OCI-LY7 (cell line): ENCODE measurements at regions of chr18 and their contacts with region 1.

Region 1: DNA sequence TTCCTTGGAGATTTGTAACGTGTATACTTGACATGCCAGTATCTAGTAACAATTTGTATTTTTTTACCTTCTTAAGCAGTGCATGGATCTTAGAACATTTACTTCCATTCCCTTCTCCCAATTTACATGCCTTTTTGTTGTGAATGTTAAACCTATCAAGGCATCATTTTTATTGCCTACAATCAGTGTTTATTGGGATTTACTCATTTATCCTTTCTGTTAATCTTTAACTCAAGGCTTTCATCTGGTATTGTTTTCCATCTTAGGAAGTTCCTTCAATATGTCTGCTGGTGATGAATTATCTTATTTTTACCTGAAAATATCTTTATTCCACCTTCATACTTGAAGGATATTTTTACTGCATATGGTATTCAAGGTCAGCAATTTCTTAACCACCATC is 88.5 kb upstream of the EMILIN2 start:
- DNase-seq: no peak
- H3K4me3 ChIP-seq: no peak overlapping the region
- H3K27ac ChIP-seq: no peak overlapping the region
- H3K4me1 ChIP-seq: no peaks in the 10 kb centered on the region
- CTCF ChIP-seq: no peak

Region 2: GRCh38 chr18:2486426-2486825 is 271.9 kb before region 1 on chr18:
- CTCF ChIA-PET with region 1: no interaction called
- POLR2A ChIA-PET with region 1: no interaction called
- intact Hi-C with region 1: no loop called
- DNase-seq: no peak
- H3K4me3 ChIP-seq: no peak overlapping the region
- H3K27ac ChIP-seq: no peak overlapping the region
- H3K4me1 ChIP-seq: peaks cover 8% of the 10 kb centered on the region
- CTCF ChIP-seq: no peak

Region 3: DNA sequence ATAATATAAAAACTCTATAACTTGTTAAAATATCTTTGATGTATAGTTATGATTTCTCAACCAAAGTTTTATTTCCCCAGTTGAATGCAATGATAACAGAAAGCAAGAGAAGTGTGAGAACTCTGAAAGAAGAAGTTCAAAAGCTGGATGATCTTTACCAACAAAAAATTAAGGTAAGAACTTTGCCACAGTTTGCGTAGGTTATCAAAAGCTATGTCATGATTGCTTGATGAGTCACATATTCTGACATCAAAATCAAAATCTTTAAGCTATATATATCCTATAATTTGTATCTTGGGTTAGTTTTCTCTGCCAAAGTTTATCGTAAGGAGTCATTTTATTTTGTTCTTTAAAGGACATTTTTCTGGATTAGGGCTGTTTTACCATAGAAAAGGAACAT is 152.0 kb before region 1 on chr18:
- CTCF ChIA-PET with region 1: no interaction called
- POLR2A ChIA-PET with region 1: no interaction called
- intact Hi-C with region 1: loop called (anchors 5 kb)
- DNase-seq: no peak
- H3K4me3 ChIP-seq: no peak overlapping the region
- H3K27ac ChIP-seq: no peak overlapping the region
- H3K4me1 ChIP-seq: peaks cover 14% of the 10 kb centered on the region
- CTCF ChIP-seq: no peak

Region 4: DNA sequence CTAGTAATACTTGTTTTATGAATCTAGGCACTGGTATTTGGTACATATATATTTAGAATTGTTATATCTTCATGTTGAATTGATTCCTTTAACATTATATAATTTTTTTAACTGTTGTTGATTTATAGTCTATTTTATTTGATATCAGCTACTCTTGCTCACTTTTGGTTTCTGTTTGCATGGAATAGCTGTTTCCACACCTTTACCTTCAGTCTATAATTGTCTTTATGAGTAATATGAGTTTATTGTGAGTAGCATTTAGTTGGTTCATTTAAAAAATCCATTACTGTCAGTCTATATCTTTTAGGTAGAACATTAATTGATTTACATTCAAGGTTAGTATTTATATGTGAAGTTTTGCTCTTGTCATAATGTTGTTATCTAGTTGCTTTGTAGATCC is 44.2 kb before region 1 on chr18:
- CTCF ChIA-PET with region 1: no interaction called
- POLR2A ChIA-PET with region 1: interaction called, 3 read pairs
- intact Hi-C with region 1: loop called (anchors 5 kb)
- DNase-seq: no peak
- H3K4me3 ChIP-seq: no peak overlapping the region
- H3K27ac ChIP-seq: no peak overlapping the region
- H3K4me1 ChIP-seq: no peaks in the 10 kb centered on the region
- CTCF ChIP-seq: no peak

Region 5: DNA sequence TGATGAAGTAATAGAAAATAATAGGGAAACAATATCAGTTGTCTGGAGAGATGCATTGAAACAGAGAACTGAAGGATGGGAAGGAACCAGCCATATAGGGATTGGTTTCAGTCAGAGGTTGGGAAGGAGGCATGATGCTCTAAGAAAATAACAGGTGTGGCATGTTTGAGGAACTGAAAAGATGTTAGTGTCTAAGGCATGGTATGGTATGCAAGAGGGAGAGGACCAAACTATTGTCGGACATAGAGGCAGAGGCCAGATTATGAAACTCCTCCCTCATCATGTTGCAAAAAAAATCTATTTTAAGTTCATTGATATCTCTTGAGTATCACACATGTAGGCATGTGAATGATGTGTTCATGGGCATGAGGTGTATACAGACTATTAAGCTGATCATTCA is 39.6 kb after region 1 on chr18:
- CTCF ChIA-PET with region 1: no interaction called
- POLR2A ChIA-PET with region 1: no interaction called
- intact Hi-C with region 1: loop called (anchors 5 kb)
- DNase-seq: peak; percentile 43
- H3K4me3 ChIP-seq: no peak overlapping the region
- H3K27ac ChIP-seq: no peak overlapping the region
- H3K4me1 ChIP-seq: peaks cover 7% of the 10 kb centered on the region
- CTCF ChIP-seq: no peak

Region 6: DNA sequence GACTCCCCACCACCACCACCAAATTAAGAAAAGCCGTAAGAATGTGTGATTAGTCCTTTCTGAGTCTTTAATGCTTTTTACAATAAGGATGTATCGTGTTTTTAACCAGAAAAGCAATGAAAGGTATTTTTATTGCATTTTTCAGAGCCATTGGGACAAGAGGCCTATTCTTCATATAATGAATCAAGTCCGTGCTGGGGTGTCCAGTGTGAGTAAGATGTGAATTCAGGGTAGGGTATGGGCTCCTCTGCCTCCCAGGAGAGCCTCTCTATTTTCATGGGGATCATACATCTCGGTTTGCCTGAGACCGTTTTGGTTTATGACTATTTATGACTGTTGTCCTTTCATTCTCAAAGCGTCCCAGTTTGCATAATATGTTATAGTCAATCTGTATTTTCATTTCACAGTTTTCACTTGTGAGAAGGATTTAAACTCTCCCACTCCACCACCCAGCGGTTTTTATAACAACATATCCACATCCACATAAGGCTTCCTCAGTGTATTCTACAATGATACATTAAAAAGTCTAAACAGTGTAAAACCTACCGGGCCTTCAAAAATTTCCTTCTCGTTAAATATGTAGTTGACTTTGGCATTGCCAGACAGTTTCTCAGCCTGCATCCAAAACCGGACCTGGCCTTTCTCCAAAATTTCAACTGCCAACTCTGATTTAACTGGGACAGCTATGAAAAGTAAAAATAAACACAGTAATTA is 335.5 kb after region 1 on chr18:
- CTCF ChIA-PET with region 1: no interaction called
- POLR2A ChIA-PET with region 1: no interaction called
- intact Hi-C with region 1: no loop called
- DNase-seq: no peak
- H3K4me3 ChIP-seq: no peak overlapping the region
- H3K27ac ChIP-seq: no peak overlapping the region
- H3K4me1 ChIP-seq: no peaks in the 10 kb centered on the region
- CTCF ChIP-seq: no peak; the same call in 1 of the 2 replicates